Activated T-helper 2 cell treated with anti-CD3 and anti-CD28 coated beads, Interferon-gamma antibody, Interleukin-2, Interleukin-4, amounts not matched to agents 10 μg/mL and 5 μg/mL and 100 μg/mL, durations not matched to agents 14 hours and 24 hours and 36 hours (primary cell): ENCODE measurements at regions of chr4 and their contacts with region 1.

Region 1: GRCh38 chr4:5812506-5813229 is 80.2 kb downstream of the CRMP1 start:
- DNase-seq: no peak
- H3K4me3 Mint-ChIP-seq: no peak overlapping the region
- H3K27ac Mint-ChIP-seq: no peak overlapping the region
- H3K4me1 Mint-ChIP-seq: no peaks in the 10 kb centered on the region
- H3K27me3 Mint-ChIP-seq: no peaks in the 10 kb centered on the region

Region 2: DNA sequence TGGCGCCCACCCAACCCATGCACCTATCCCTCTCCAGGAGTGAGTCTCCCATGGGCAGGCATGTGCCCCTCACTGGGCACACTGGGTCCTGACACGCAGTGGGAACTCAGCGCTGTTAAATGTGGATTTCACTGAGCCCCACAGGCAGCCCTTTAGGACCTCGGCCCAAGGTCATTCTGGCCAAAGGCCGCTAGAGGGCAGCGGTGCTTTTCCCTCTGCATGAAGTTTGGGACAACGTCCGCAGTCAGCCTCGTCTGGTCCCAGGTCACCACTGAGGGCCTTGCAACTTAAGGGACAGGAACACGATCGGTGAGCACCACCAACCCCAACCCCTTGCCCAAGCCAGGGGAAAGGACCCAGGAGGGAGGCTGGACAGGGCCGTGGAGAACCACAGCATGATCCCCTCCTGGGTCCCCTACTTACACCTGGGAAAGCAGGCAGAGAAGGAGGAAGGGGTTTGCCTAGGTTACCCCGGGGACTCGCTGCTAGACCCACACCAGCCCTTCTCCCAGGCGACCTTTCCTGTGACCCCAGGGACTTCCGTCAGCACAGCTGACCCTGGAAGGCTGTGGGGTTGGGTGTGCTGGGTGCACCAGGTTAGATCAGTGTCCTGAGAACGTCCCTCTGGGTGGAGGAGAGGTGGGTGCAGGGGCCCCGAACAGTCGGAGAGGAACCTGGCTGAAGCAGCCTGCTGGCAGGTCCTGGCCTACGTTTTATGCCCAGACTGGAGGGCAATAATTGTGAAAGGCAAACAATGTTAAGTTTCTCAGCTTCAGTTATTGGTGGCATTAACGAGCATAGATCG is 817.4 kb before region 1 on chr4:
- intact Hi-C with region 1: loop called (anchors 5 kb)
- DNase-seq: peak; percentile 21
- H3K4me3 Mint-ChIP-seq: no peak overlapping the region
- H3K27ac Mint-ChIP-seq: no peak overlapping the region
- H3K4me1 Mint-ChIP-seq: no peaks in the 10 kb centered on the region
- H3K27me3 Mint-ChIP-seq: no peaks in the 10 kb centered on the region

Region 3: DNA sequence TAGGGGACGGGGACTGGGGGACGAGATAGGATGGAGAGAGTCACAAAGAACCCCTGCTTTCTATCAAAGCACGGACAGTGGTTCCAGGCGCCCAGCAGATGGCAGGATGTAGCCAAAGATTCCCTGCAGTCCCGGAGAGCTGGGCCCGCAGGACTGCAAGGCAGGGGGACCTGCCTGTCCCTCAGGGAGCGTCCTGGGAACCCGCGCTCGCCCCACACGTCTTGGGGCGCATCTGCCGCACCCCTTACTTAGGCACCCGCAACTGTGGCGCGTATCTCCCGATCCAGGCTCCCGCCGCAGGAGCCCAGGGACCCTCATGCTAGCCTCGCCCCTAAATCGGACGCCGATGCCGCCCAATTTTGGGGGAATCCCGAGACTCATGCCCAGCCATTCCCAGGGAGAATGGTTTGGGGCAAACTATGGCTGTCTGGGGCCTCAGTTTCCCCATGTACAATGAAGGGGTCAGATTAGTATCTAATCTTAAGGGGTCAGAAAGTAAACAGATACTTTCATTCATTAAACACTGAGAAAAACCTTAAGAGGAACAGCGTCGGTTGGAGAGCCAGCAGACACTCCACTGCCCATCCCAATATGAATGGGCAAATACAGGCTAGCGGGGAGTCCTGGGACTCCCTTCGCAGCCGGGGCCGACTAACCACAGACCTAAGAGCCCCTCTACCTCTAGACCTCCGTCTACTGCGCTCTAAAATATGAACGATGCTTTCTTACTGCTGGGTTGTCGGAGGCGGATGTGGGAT is 762.0 kb before region 1 on chr4:
- intact Hi-C with region 1: loop called (anchors 2 kb)
- DNase-seq: no peak
- H3K4me3 Mint-ChIP-seq: peak overlapping the region; percentile 51
- H3K27ac Mint-ChIP-seq: no peak overlapping the region
- H3K4me1 Mint-ChIP-seq: peaks cover 6% of the 10 kb centered on the region
- H3K27me3 Mint-ChIP-seq: peaks cover 45% of the 10 kb centered on the region